Activated CD8-positive, alpha-beta T cell treated with anti-CD3 and anti-CD28 coated beads for 36 hours (primary cell): ENCODE measurements at regions of chr3 and their contacts with region 1.

Region 1: DNA sequence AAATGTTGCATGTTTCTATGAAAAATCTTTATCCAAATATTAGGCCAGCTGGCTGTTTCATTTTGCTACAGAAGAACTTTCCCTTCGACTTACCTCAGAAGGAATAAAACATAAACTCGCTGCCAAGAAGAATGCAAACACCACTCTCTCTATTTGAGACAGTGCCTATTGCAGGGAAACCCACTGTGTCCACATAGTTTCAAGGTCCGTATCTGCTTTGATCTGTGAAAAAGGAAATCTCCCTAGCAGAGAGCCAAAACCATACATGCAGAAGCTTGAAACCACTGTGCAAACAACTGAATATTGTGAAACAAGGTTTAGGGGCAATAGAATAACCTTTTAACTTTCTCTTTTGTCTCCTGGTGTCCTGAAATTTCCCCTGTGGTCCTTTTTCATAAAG is 35.0 kb upstream of the CAPN7 start:
- DNase-seq: no peak
- ATAC-seq: no peak
- H3K4me3 Mint-ChIP-seq: no peak overlapping the region
- H3K27ac Mint-ChIP-seq: no peak overlapping the region
- H3K4me1 Mint-ChIP-seq: no peaks in the 10 kb centered on the region
- H3K27me3 Mint-ChIP-seq: peaks cover 15% of the 10 kb centered on the region
- CTCF ChIP-seq: no peak

Region 2: DNA sequence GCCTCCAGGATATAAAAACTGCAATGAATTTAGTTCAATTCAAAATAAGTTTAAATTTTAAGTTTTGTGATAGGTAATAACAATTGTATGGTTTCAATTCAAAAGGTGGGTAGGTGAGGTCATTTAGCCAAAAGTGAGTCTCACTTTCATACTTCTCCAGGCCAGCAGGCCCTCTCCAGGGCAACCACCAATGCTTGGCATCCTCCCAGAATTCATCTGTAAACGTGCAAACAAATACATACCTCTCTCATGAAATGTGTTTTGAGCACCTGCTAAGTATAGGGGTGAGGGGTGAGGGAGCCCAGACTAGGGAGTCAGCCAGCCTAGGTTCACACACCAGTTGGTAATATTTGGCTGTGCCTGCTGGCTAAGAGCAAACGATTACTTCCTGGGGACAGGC is 50.1 kb before region 1 on chr3:
- CTCF ChIA-PET with region 1: interaction called, 17 read pairs
- POLR2A ChIA-PET with region 1: no interaction called
- intact Hi-C with region 1: no loop called
- DNase-seq: no peak
- ATAC-seq: no peak
- H3K4me3 Mint-ChIP-seq: no peak overlapping the region
- H3K27ac Mint-ChIP-seq: no peak overlapping the region
- H3K4me1 Mint-ChIP-seq: peaks cover 4% of the 10 kb centered on the region
- H3K27me3 Mint-ChIP-seq: no peaks in the 10 kb centered on the region
- CTCF ChIP-seq: no peak